ENCODE measurements at regions of chr3 and their contacts with region 1.

Region 1: GRCh38 chr3:187319699-187320302 is 28.3 kb upstream of the MASP1 start:
- DNase-seq: peak; percentile 50 to 67 (median 62)
- H3K4me3 ChIP-seq: no peak overlapping the region
- H3K4me3 Mint-ChIP-seq: peak overlapping the region in 1 of 2 donors; percentile 5
- H3K27ac ChIP-seq: no peak overlapping the region
- H3K27ac Mint-ChIP-seq: no peak overlapping the region
- H3K4me1 ChIP-seq: peaks cover 0 to 5% of the 10 kb centered on the region in 2 donors
- H3K4me1 Mint-ChIP-seq: peaks cover 6% of the 10 kb centered on the region
- H3K27me3 ChIP-seq: no peaks in the 10 kb centered on the region
- H3K27me3 Mint-ChIP-seq: peaks cover 0 to 12% (median 6%) of the 10 kb centered on the region in 3 donors
- CTCF ChIP-seq: peak; percentile 89

Region 2: DNA sequence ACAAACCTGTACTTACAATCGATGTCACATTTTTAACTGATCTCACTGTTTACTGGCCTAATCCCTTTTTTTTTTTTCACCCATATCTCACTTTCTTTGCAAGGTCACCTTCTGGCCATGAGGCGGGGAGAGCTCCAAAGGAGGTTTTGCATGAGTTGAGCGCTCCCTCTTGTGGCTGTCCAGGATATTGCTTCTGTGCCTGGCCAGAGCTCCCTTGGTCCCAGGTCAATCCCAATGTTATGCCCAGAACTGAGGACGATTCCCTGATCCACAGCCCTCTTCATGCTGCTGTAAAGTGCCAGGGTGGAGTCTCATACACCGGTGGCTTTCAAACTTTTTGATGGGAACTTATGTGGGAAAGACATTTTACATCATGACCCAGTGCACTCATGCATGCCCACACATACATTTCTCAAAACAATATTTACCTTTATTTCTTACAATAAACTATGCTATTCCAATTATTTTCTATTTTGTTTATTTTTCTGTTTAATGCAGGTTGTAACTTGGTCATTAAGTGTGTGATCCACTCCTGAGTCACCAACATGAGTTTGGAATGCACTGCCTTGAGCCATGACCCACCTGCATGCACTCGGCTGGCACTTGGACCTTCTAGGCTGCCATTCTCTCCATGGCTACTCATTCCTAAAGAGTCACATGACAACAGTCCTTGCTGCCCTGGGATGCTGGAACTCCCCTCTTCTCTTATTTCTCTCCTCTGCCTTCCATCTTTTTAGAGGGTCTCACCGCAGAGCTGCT is 360.0 kb after region 1 on chr3:
- intact Hi-C with region 1: loop called (anchors 2 kb)
- DNase-seq: peak; percentile 36 to 57 (median 52)
- H3K4me3 ChIP-seq: no peak overlapping the region
- H3K4me3 Mint-ChIP-seq: no peak overlapping the region
- H3K27ac ChIP-seq: no peak overlapping the region
- H3K27ac Mint-ChIP-seq: no peak overlapping the region
- H3K4me1 ChIP-seq: no peaks in the 10 kb centered on the region
- H3K4me1 Mint-ChIP-seq: peaks cover 2% of the 10 kb centered on the region
- H3K27me3 ChIP-seq: peaks cover 0 to 9% of the 10 kb centered on the region in 2 donors
- H3K27me3 Mint-ChIP-seq: peaks cover 2 to 18% (median 11%) of the 10 kb centered on the region in 3 donors
- CTCF ChIP-seq: peak; percentile 94

Region 3: DNA sequence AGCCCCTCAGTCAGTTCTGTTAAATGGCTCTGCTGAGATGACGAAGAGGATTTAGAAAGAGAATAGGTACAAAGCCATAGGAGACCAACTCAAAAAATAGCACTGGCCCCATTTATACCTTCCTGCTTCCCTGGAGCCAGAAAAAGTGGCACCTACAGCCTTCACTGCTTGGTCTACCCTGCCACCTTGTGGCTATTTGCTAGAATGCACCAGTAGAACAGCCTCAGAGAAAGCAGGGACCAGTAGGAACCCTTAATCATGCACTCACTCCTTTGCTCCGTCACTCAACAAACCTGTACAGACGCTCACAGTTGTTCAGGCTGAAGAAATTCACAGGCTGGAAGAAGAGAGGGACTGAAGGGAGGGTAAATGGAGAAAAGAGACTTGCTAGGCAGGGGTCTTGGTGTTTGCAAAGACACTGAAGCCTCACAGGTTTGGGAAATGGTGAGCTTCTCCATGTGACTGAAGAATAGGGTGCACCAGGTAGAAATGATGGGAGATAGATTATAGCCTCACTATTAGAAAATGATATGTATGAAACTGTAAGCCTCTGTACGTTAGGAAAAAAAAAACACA is 394.7 kb after region 1 on chr3:
- intact Hi-C with region 1: loop called (anchors 5 to 10 kb)
- DNase-seq: peak; percentile 55 to 71 (median 66)
- H3K4me3 ChIP-seq: no peak overlapping the region
- H3K4me3 Mint-ChIP-seq: no peak overlapping the region
- H3K27ac ChIP-seq: no peak overlapping the region
- H3K27ac Mint-ChIP-seq: peak overlapping the region in 2 of 7 donors; percentile 12 to 45
- H3K4me1 ChIP-seq: no peaks in the 10 kb centered on the region
- H3K4me1 Mint-ChIP-seq: peaks cover 7% of the 10 kb centered on the region
- H3K27me3 ChIP-seq: no peaks in the 10 kb centered on the region
- H3K27me3 Mint-ChIP-seq: no peaks in the 10 kb centered on the region
- CTCF ChIP-seq: peak; percentile 93

Region 4: GRCh38 chr3:187719628-187720336 is 400.0 kb after region 1 on chr3:
- intact Hi-C with region 1: loop called (anchors 5 to 10 kb)
- DNase-seq: no peak
- H3K4me3 ChIP-seq: no peak overlapping the region
- H3K4me3 Mint-ChIP-seq: no peak overlapping the region
- H3K27ac ChIP-seq: peak overlapping the region in 1 of 2 donors; percentile 47
- H3K27ac Mint-ChIP-seq: peak overlapping the region in 6 of 7 donors; percentile 30 to 72 (median 44)
- H3K4me1 ChIP-seq: no peaks in the 10 kb centered on the region
- H3K4me1 Mint-ChIP-seq: peaks cover 4% of the 10 kb centered on the region
- H3K27me3 ChIP-seq: no peaks in the 10 kb centered on the region
- H3K27me3 Mint-ChIP-seq: no peaks in the 10 kb centered on the region
- CTCF ChIP-seq: no peak

Measured in CD14-positive monocyte (primary cell).